HCT116 (cell line): ENCODE measurements at regions of chr10 and their contacts with region 1.

Region 1: DNA sequence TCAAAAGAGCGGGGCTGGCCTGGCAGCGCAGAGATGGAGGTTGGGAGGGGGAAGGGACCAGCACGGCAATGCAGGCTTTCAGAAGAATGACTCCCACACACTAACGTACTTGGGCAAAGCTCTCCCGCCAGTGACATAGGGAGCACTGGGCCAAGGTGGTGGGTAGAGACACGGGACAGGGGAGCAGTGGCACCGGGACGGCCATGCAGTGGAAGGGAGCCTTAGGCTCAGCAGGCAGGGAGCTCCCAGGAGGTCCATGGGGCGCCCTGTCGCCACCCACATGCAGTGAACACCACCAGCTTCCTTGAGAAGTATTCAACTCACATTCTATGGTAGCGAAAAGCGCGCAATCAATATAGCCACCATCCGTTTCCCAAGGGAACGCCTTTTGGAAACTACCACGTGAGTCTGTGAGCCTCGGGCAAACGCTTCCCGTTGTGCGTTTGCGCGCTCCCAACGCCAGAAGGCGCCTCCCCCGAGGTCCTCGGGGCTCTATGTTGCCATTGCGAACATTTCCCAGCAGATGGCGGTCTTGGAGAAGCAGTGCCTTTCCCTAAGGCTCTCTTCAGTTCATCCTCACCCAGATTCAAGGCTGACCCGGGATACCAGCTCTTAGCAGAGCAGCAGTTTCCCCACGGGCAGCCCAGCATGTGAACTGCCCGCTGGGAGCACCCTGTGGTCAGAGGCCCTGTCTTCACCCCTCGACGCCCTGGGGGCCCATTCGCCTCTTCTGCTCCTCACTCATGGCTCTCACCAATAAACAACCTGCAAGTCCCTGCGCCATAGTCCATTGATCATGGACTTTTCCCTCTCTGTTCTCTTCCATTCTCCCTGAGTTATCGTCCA is 16.4 kb upstream of the OPALIN start:
- DNase-seq: peak; percentile 81
- ATAC-seq: peak; percentile 91
- H3K4me3 ChIP-seq: peak overlapping the region; percentile 27 to 29; a peak in 3 of 4 replicates
- H3K27ac ChIP-seq: no peak overlapping the region; the same call in 1 of the 2 replicates
- H3K4me1 ChIP-seq: peaks cover 0 to 24% of the 10 kb centered on the region in 2 experiments; a peak in 3 of 4 replicates
- H3K27me3 ChIP-seq: no peaks in the 10 kb centered on the region
- CTCF ChIP-seq: peak; percentile 93 to 99 (median 97)
- POLR2A ChIP-seq: no peak
- RAD21 ChIP-seq: peak; percentile 93

Region 2: GRCh38 chr10:96211764-96212163 is 163.4 kb before region 1 on chr10:
- CTCF ChIA-PET with region 1: no interaction called
- POLR2A ChIA-PET with region 1: no interaction called
- RAD21 ChIA-PET with region 1: no interaction called
- intact Hi-C with region 1: no loop called
- DNase-seq: no peak
- ATAC-seq: no peak
- H3K4me3 ChIP-seq: no peak overlapping the region
- H3K27ac ChIP-seq: no peak overlapping the region
- H3K4me1 ChIP-seq: no peaks in the 10 kb centered on the region
- H3K27me3 ChIP-seq: no peaks in the 10 kb centered on the region
- CTCF ChIP-seq: no peak
- POLR2A ChIP-seq: no peak
- RAD21 ChIP-seq: no peak

Region 3: GRCh38 chr10:96334616-96335526 is 40.3 kb before region 1 on chr10:
- CTCF ChIA-PET with region 1: interaction called, 9 read pairs
- POLR2A ChIA-PET with region 1: no interaction called
- RAD21 ChIA-PET with region 1: no interaction called
- intact Hi-C with region 1: loop called (anchors 1 kb)
- DNase-seq: peak; percentile 13
- ATAC-seq: peak; percentile 89
- H3K4me3 ChIP-seq: no peak overlapping the region
- H3K27ac ChIP-seq: no peak overlapping the region
- H3K4me1 ChIP-seq: no peaks in the 10 kb centered on the region
- H3K27me3 ChIP-seq: peaks cover 7% of the 10 kb centered on the region; the same call in 1 of the 2 replicates
- CTCF ChIP-seq: peak; percentile 66 to 88 (median 84); a peak in 5 of 6 replicates
- POLR2A ChIP-seq: no peak
- RAD21 ChIP-seq: peak; percentile 70

Region 4: GRCh38 chr10:96642973-96643372 is 267.8 kb after region 1 on chr10:
- CTCF ChIA-PET with region 1: interaction called, 4 read pairs
- POLR2A ChIA-PET with region 1: no interaction called
- RAD21 ChIA-PET with region 1: no interaction called
- intact Hi-C with region 1: loop called (anchors 10 kb)
- DNase-seq: peak; percentile 31
- ATAC-seq: peak; percentile 68
- H3K4me3 ChIP-seq: no peak overlapping the region
- H3K27ac ChIP-seq: no peak overlapping the region
- H3K4me1 ChIP-seq: peaks cover 3 to 22% of the 10 kb centered on the region in 2 experiments; a peak in 3 of 4 replicates
- H3K27me3 ChIP-seq: no peaks in the 10 kb centered on the region
- CTCF ChIP-seq: peak; percentile 69 to 77 (median 71); a peak in 5 of 6 replicates
- POLR2A ChIP-seq: no peak
- RAD21 ChIP-seq: peak; percentile 80